ENCODE measurements at regions of chr2 and their contacts with region 1.

Region 1: DNA sequence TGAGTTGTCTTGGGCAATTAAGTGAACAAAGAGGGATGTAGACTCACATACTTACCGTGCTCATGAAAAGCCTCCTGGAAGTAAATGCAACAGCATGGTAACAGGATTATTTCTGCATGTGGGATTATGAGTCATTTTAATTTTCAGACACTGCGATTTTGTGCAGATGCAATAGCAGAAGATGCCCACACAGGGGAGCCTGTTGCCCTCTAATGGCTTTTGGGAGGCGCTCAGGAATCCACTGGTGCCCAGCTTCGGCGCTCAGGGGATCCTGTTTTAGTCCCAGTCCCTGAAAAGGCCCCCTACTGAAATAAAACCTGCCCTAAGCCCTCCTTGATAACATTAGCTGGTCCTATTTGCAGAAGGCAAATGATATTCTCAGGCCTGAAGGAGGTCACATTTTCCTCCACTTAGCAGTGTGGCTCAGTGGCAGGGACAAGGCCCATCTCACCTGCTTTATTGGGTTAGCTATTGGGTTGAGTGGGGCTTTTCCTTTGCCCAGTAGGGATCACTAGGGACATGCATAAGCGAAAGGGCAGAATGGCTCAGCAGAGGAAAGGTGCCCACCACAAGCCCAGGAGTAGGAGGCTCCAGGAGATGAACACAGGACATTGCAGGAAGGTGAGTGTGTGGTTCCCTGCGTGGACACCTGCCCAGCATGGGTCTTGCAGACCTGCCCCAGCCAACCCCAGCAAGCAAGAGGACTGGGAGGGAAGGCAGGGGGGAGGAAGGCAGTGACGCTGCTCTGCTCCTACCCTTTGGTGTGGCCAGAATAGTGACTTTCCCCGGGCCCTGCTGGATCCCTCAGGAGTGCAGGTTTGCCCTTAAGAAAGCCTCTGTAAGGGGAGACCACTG is 26.5 kb upstream of the KCNS3 start:
- DNase-seq: peak; percentile 46
- ATAC-seq: peak; percentile 87

Region 2: DNA sequence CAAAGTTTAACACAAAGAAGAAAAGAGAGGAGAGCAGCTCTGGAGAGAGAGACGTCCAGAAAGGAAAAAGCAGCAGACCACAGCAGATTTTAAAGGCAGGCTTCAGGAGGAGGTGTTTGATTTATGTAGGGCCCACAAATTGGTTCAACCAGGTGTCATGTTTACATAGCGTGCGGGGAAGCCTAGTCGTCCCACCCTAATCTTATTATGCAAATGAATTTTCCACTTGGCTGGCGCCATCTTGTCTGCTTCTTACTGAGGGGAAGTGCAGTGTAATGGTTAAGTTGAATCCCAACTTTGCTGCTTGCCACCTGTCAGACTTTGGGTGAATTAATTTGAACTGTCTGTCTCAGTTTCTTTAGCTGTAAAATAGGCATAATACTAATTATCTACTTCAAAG is 903.9 kb before region 1 on chr2:
- intact Hi-C with region 1: no loop called
- DNase-seq: no peak
- ATAC-seq: no peak

Region 3: GRCh38 chr2:18149645-18150246 is 297.8 kb after region 1 on chr2:
- intact Hi-C with region 1: loop called (anchors 5 kb)
- DNase-seq: no peak
- ATAC-seq: no peak

Region 4: DNA sequence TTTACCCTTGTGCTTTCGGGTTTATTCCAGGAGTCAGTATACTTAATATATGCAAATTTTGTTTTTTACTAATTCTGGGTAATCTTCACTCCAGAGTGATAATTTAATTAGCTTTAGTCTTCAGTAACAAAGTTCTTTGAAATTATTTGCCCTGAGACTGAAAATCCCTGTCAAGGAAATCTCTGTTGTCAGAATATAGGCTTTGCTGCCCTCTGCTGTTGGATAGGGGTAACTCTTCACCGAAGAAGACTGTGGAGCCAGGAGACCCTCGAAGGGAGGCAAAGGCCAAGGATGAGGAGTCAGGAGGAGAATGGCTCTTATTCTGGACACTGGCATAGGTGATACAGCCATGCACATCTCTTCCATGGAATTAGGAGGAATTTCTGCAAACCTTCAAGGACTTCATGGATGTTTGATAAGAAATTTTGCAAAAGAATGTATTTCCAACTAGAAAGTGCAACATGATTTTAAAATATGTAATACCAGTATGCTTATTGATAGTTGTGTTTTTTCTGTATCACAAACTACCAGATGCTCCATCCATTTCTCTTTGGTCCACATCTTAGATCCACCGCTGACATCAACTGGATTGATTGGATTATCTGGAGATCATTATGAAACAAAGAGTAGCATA is 526.2 kb after region 1 on chr2:
- intact Hi-C with region 1: loop called (anchors 5 kb)
- DNase-seq: no peak
- ATAC-seq: peak; percentile 63